Activated CD4-positive, alpha-beta T cell treated with anti-CD3 and anti-CD28 coated beads for 36 hours (primary cell): ENCODE measurements at regions of chr5 and their contacts with region 1.

Region 1: DNA sequence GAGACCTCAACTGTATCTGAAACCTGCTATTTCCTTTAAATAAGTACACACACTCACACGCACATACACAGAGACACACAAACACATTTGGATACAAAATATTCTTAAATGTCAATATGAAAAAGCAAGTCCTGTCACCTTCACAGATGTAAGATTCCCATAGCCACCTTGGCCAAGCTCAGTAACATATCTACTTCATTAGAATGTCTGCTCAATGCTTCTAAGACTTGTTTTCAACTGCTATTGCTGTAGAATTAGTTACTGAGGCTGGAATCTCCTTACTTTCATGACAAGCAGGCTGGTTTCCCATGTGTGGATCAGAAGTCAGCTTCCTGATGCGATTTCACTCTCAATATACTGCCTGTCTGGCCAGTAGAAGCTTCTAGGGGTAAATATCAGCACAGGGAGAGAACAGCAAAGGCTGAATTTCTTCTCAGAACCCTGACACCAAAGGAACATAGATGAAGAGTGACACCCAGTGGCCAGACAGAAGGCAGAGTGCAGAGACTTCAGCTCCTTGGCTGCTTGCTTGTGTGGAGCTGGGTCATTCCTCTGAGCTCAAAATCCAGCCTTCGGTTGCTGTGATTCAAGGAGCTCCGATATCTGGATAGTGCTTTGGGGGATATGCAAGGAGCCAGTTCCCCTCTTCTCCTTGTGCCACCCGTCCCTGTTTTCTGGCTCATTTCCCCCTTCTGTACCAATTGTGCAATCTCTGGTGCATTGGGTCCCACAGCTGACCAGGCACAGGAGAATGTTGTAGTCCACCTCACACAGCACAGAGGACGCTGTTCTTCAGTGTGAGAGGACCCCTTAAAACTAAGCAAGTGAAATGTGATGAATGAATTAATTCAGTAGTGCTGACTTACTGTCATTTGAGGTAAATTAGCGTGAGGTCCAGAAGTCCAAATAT is 26.6 kb upstream of the ABLIM3 start:
- DNase-seq: peak; percentile 68
- ATAC-seq: peak; percentile 78
- H3K4me3 Mint-ChIP-seq: no peak overlapping the region
- H3K27ac Mint-ChIP-seq: no peak overlapping the region
- H3K4me1 Mint-ChIP-seq: peaks cover 3% of the 10 kb centered on the region
- H3K27me3 Mint-ChIP-seq: peaks cover 18% of the 10 kb centered on the region

Region 2: GRCh38 chr5:148186248-148186996 is 928.2 kb before region 1 on chr5:
- CTCF ChIA-PET with region 1: no interaction called
- POLR2A ChIA-PET with region 1: no interaction called
- intact Hi-C with region 1: loop called in 1 of 2 experiments (anchors 10 kb)
- DNase-seq: no peak
- ATAC-seq: peak; percentile 99
- H3K4me3 Mint-ChIP-seq: no peak overlapping the region
- H3K27ac Mint-ChIP-seq: no peak overlapping the region
- H3K4me1 Mint-ChIP-seq: peaks cover 11% of the 10 kb centered on the region
- H3K27me3 Mint-ChIP-seq: peaks cover 15% of the 10 kb centered on the region

Region 3: DNA sequence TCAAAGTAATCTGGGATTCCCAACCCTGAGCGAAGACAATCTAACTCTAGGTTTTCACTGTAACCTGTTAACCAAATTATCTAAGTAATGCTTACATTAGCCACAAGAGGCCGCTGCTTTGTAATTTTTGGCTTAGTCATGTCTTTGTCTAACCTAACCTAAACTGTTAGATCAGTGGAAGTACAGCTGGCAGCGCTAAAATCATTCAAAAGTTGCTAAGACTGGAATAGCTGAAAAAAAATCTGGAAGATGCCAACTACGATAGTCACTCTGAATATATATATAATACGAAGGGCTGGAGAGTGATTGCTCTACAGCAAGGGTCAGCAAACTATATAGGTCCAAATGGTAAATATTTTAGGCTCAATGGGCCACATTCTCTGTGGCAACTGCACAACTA is 670.7 kb before region 1 on chr5:
- CTCF ChIA-PET with region 1: no interaction called
- POLR2A ChIA-PET with region 1: no interaction called
- intact Hi-C with region 1: loop called (anchors 5 to 10 kb)
- DNase-seq: peak; percentile 63
- ATAC-seq: peak; percentile 83
- H3K4me3 Mint-ChIP-seq: no peak overlapping the region
- H3K27ac Mint-ChIP-seq: no peak overlapping the region
- H3K4me1 Mint-ChIP-seq: no peaks in the 10 kb centered on the region
- H3K27me3 Mint-ChIP-seq: no peaks in the 10 kb centered on the region

Region 4: DNA sequence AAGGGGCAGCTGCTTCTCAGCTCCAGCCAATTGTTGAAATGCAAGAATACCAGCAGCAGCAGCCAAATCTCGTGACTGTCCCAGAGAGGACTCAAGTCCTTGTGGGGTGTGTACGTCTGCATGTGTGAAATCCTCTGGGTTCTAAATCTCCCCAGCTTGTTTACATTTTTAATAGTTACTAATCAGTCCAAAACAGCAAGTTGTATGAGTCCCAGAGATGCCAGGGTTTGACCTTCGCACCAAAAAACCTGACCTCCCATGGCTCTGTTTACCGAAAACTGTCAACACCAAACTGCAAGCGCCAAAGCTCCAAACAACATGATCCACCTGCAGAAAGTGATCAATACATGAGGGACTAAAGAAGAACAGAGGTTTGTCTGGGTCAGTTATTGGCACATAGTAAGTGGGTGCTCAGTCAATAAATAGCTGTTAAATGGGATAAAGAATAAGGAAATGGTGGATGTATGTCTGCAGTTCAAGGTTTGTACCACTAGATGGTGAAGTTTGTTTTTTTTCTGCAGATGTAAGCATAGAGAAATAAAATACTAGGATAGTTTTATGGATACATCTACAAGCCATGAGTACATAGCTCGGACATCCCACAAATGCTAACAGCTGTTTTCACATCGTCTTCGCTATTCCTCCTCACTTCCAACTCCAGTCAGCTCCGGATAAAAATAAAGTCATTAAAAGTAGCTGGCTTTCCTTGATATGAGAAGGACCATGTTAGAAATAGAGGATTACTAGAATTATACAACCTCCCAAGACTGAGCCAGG is 373.5 kb before region 1 on chr5:
- CTCF ChIA-PET with region 1: interaction called, 39 read pairs
- POLR2A ChIA-PET with region 1: no interaction called
- intact Hi-C with region 1: no loop called
- DNase-seq: no peak
- ATAC-seq: no peak
- H3K4me3 Mint-ChIP-seq: no peak overlapping the region
- H3K27ac Mint-ChIP-seq: no peak overlapping the region
- H3K4me1 Mint-ChIP-seq: no peaks in the 10 kb centered on the region
- H3K27me3 Mint-ChIP-seq: peaks cover 13% of the 10 kb centered on the region

Region 5: DNA sequence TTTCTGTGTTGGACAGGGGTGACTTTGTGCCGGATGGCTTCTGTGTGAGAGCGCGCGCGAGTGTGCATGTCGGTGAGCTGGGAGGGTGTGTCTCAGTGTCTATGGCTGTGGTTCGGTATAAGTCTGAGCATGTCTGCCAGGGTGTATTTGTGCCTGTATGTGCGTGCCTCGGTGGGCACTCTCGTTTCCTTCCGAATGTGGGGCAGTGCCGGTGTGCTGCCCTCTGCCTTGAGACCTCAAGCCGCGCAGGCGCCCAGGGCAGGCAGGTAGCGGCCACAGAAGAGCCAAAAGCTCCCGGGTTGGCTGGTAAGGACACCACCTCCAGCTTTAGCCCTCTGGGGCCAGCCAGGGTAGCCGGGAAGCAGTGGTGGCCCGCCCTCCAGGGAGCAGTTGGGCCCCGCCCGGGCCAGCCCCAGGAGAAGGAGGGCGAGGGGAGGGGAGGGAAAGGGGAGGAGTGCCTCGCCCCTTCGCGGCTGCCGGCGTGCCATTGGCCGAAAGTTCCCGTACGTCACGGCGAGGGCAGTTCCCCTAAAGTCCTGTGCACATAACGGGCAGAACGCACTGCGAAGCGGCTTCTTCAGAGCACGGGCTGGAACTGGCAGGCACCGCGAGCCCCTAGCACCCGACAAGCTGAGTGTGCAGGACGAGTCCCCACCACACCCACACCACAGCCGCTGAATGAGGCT is 288.5 kb before region 1 on chr5 and contains the start of gene ADRB2:
- CTCF ChIA-PET with region 1: no interaction called
- POLR2A ChIA-PET with region 1: no interaction called
- intact Hi-C with region 1: loop called in 1 of 2 experiments (anchors 10 kb)
- DNase-seq: peak; percentile 89
- ATAC-seq: peak; percentile 95
- H3K4me3 Mint-ChIP-seq: peak within 1 kb of the TSS; percentile 66
- H3K27ac Mint-ChIP-seq: peak within 1 kb of the TSS; percentile 3
- H3K4me1 Mint-ChIP-seq: peaks cover 22% of the 10 kb centered on the region
- H3K27me3 Mint-ChIP-seq: peaks cover 30% of the 10 kb centered on the region
- total RNA-seq, gene ADRB2: 0.09 TPM in 1 of 2 experiments, not detected in the other

Region 6: DNA sequence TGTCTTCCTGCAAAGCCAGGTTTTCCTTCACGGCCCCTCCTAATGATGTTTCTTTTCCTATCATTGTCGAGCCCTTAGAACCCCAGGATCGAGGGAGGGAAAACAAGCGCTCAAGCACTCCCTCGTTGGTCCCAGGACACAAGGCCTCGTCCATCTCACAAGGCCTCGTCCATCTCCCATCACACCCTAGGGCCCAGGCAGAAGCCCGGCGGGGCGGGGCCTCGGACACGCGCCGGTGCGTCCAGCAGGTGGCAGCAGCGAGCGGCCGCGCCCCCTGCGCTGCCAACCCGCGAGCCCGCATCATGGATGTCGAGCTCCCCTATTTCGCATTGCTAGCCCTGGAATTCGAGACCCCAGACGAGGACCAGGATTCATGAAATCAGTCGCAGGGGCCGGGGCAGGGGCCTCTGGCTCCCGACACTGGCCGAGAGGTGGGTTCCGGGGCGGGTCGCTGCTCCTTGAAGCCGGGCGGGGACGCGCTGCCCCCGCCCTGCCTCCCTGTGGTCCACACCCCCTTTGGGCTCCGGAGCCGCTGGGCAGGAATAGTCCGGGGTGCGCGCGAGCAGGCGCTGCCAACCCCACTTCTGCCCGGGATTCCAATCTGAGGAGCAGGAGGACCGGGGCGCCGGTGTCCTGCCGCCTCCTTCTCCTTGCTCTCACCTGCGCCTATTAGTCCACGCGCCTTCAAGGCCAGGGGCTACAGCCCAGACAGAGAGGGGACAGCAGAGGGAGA is 26.7 kb after region 1 on chr5 and contains the start of gene ABLIM3:
- CTCF ChIA-PET with region 1: interaction called, 12 read pairs
- POLR2A ChIA-PET with region 1: no interaction called
- intact Hi-C with region 1: no loop called
- DNase-seq: peak; percentile 83
- ATAC-seq: peak; percentile 96
- H3K4me3 Mint-ChIP-seq: peak within 1 kb of the TSS; percentile 29
- H3K27ac Mint-ChIP-seq: no peak within 1 kb of the TSS
- H3K4me1 Mint-ChIP-seq: no peaks in the 10 kb centered on the region
- H3K27me3 Mint-ChIP-seq: peaks cover 5% of the 10 kb centered on the region
- total RNA-seq, gene ABLIM3: 0.07 TPM in 1 of 2 experiments, not detected in the other